Right cardiac atrium (tissue), 5 donors: ENCODE measurements at regions of chr4 and their contacts with region 1.

Region 1: DNA sequence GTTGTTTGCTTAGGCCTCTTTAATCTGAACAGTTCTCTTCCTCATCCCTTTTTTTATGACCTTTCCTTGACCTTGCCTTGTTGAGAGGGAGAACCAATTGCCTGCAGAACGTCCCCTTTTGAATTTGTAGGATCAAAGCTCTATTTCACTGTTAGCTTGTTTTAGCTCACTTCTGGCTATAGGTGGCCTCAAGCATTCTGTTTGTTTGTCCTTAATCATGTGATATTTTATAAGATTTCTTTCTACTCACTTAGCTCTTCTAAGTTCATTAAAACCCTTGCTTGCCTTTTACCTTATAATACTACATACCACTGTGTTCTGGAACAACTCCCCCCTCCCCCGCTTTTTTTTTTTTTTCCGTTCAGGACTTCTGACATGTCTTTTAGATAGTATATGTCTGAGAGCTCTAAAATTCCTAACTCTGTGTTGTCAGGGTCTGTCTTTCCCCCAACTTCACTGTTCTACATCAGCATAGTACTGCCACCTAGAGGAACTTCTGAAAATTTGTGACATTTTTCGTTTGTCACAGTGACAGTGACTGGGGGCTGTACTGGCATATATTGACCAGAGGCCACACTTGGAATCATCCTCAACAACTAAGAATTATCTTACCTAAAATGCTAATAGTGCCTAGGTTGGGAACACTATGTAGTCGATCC is 128.5 kb downstream of the LARP7 start:
- DNase-seq: no peak
- ATAC-seq: peak; percentile 37 to 41
- H3K4me3 ChIP-seq: no peak overlapping the region
- H3K27ac ChIP-seq: no peak overlapping the region
- H3K4me1 ChIP-seq: no peaks in the 10 kb centered on the region
- H3K27me3 ChIP-seq: no peaks in the 10 kb centered on the region

Region 2: GRCh38 chr4:111506706-111507105 is 1258.7 kb before region 1 on chr4:
- intact Hi-C with region 1: no loop called
- DNase-seq: no peak
- ATAC-seq: no peak
- H3K4me3 ChIP-seq: no peak overlapping the region
- H3K27ac ChIP-seq: no peak overlapping the region
- H3K4me1 ChIP-seq: no peaks in the 10 kb centered on the region
- H3K27me3 ChIP-seq: no peaks in the 10 kb centered on the region

Region 3: GRCh38 chr4:112436955-112437354 is 328.5 kb before region 1 on chr4:
- intact Hi-C with region 1: no loop called
- DNase-seq: no peak
- ATAC-seq: no peak
- H3K4me3 ChIP-seq: no peak overlapping the region
- H3K27ac ChIP-seq: no peak overlapping the region
- H3K4me1 ChIP-seq: no peaks in the 10 kb centered on the region
- H3K27me3 ChIP-seq: no peaks in the 10 kb centered on the region

Region 4: DNA sequence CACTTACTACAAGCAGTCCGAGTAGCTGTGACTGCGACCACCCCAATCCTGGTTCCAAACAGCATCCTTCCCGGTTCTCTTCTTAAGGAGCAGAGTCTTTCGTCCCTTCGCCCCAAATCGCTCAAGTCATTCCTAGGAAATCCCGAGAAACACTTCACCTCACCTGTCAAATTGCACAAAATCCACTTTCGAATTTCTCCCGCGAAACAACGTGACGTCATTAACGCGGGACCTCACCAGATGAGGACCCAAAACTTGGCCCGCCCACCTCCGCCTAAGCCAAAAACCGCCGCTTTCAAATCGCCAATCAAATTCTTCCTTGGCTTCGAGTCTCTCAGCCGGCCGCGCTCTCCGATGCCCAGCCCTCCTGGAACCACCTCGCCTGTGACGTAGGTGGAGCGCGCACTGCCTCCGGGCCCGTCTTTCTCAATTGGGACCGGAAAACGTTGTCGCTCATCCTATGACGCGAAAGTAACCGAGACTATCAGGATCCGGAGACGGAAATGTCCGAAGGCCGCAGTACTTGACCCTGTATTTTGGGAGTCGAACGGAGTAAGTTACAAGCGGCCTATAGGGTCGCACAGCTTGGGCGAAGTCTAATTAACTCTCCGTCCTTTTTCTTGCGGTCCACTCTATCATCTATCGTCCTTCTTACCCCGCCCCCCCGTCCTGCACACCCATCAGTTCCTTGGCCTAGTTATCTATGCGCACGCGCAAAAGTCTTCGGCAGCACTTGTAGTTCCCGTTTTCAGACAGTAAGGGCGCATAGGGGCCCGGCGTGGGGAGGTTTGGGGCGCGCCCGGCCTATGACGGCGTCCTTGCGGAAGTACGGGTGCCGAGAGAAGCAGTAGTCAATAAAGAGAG is 128.5 kb before region 1 on chr4 and contains the starts of genes LARP7 and ZGRF1:
- intact Hi-C with region 1: loop called (anchors 2 to 5 kb)
- DNase-seq: peak; percentile 99
- ATAC-seq: peak; percentile 98 to 99
- H3K4me3 ChIP-seq: peak within 1 kb of the TSS; percentile 91
- H3K27ac ChIP-seq: peak within 1 kb of the TSS; percentile 96
- H3K4me1 ChIP-seq: no peaks in the 10 kb centered on the region
- H3K27me3 ChIP-seq: no peaks in the 10 kb centered on the region
- total RNA-seq, gene LARP7: 46.4 to 54.8 (median 49.5) TPM
- total RNA-seq, gene ZGRF1: 1.9 to 2.5 (median 2.4) TPM

Region 5: DNA sequence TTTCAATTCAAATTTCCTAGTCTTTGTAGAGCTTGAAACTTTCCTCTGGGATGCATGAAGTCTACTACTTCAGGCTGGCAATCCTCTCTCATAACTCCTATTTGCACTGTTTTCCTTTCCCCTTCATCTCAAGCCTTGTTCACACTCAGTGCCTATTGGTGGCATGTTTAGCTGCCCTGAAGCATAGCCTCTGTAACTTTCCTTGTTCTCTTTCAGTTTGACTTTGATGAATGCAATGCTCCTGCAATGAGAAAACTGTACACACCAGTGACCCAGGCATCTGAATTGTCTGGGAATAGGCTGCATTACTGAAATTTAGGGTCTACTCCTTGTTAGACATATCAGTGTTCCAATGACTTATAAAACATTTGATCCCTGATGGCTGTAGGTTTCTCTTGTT is 365.7 kb after region 1 on chr4:
- intact Hi-C with region 1: no loop called
- DNase-seq: no peak
- ATAC-seq: no peak
- H3K4me3 ChIP-seq: no peak overlapping the region
- H3K27ac ChIP-seq: no peak overlapping the region
- H3K4me1 ChIP-seq: no peaks in the 10 kb centered on the region
- H3K27me3 ChIP-seq: no peaks in the 10 kb centered on the region